GM13977 (cell line): ENCODE measurements at regions of chr14 and their contacts with region 1.

Region 1: DNA sequence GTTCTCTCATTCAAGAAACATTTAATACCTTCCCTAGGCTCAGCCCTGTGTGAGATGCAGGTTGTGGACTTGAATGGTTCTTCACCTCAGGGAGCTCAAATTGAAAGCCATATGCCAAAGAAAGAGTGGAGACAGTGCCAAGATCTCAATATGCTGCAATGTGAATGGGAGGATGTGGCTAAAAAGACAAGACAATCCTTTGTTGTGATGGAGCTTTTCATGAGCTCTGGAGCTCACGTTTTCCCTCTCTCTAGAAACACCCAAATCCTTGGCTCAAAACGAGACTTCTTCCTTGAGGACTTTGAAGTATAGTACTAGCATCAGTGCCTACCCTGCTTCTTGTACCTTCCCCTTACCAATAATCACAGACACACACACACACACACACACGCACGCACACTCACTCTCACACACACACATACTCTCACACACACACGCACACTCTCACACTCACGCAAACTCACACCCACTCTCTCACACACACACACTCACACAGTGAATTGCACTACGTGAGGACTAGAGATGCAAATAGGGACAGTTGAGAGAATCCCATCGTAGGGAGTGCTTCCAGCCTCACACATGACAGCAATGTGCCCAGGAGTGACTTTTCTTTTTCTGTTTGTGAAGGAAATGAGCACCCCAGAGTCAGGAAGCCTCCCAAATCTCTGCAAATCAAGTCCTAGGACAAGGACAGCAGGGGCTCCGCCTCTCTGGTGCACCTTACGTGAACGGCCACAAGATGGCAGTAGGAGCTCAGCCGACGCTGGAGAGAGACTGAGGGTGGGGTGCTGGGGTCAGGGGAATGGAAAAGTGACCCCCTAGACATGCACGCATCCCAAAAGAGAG is 231.4 kb downstream of the PCNX1 start:
- DNase-seq: peak; percentile 72
- CTCF ChIP-seq: peak; percentile 93

Region 2: GRCh38 chr14:70714055-70714621 is 424.5 kb before region 1 on chr14:
- in situ Hi-C with region 1: no loop called
- DNase-seq: no peak
- CTCF ChIP-seq: peak; percentile 47

Region 3: GRCh38 chr14:71753126-71753830 is 614.6 kb after region 1 on chr14:
- in situ Hi-C with region 1: loop called (anchors 10 kb)
- DNase-seq: peak; percentile 81
- CTCF ChIP-seq: peak; percentile 92